AG04450 (cell line): ENCODE measurements at regions of chr20 and their contacts with region 1.

Region 1: DNA sequence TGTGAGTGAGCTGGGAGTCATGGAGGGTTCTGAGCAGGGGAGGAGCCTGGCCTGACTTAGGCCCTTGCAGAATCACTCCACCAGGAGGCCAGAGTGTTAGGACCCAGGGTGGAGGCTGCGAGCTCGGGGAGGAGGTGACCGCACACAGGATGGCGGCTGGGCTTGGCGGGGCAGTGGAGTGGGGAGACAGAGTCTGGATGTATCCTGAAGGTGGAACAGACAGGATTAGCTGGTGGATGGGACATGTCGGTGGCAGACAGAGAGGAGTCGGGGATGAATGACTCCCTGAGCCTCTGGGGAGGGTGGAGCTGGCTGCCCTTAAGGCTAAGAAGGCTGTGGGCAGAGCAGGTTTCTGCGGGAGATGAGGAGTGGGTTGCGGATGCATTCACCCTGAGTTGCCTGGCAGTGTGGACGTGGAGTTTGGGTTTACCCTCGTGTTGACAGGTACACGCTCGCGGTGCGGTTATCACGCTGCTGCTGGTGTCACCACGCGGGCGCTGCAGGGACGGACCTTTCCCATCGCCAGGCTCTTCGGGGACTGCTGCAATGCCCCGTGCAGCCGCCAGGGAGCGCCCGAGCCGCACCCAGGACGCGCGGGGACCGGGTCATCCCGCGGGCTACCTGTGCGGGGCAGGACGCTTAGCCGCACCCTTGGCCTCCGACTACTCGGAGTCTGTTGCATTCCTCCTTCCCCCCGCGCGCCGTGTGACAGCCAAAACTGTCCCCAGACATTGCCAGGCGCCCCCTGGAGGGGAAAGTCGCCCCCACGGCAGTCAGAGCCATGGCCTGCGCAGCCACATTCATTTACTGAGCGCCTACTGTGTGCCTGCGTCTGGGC is 43.0 kb upstream of the PTGIS start:
- DNase-seq: no peak
- H3K4me3 ChIP-seq: peak overlapping the region; percentile 29
- H3K27ac ChIP-seq: no peak overlapping the region
- H3K27me3 ChIP-seq: peaks cover 9% of the 10 kb centered on the region
- CTCF ChIP-seq: peak; percentile 99

Region 2: DNA sequence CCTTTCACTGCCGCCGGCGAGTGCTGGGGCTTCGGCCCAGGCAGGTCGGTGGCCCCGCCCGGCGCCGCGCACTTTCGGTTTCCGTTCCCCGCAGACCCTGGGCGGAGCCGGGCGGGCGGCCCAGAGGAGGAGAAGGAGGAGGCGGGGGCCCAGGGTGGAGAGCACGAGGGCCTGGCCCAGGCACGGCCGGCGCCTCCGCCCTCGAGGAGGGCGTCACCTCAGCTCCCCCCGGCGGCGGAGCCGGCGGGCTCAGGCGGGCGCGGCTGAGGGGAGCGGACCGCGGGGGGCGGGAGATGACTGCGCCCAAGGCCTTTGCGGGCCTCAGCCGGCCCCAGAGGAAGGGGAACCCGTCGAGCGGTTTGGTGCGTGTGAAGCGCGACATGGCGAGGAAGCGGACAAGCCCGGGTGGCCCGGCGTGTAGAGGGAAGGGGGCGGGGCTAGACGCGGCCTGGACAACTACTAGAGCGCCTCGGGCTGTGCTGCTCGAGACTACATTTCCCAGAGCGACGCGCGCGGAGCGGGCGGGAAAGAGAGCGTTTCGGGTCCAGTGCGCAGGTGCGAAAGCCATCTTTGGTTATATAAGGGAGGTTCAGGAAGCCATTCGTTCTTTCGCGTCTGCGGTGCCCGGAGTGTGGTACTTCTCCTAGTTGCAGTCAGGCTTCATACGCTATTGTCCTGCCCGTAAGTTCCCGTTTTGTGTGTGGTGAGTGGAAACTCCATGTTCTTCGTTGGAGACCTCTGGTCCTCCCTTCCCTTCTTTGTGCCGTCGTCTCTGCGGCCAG is 332.7 kb before region 1 on chr20 and contains the start of gene ZNFX1:
- CTCF ChIA-PET with region 1: no interaction called
- POLR2A ChIA-PET with region 1: no interaction called
- DNase-seq: peak; percentile 94
- H3K4me3 ChIP-seq: peak within 1 kb of the TSS; percentile 99
- H3K27ac ChIP-seq: peak within 1 kb of the TSS; percentile 90
- H3K27me3 ChIP-seq: no peaks in the 10 kb centered on the region
- CTCF ChIP-seq: no peak
- polyA plus RNA-seq, gene ZNFX1: 9.6 and 16.6 TPM in 2 replicates

Region 3: GRCh38 chr20:49583669-49584417 is 27.1 kb before region 1 on chr20:
- CTCF ChIA-PET with region 1: interaction called, 14 read pairs
- POLR2A ChIA-PET with region 1: no interaction called
- DNase-seq: peak; percentile 88
- H3K4me3 ChIP-seq: no peak overlapping the region
- H3K27ac ChIP-seq: peak overlapping the region; percentile 65
- H3K27me3 ChIP-seq: no peaks in the 10 kb centered on the region
- CTCF ChIP-seq: peak; percentile 12; the same call in 1 of the 2 replicates

Region 4: DNA sequence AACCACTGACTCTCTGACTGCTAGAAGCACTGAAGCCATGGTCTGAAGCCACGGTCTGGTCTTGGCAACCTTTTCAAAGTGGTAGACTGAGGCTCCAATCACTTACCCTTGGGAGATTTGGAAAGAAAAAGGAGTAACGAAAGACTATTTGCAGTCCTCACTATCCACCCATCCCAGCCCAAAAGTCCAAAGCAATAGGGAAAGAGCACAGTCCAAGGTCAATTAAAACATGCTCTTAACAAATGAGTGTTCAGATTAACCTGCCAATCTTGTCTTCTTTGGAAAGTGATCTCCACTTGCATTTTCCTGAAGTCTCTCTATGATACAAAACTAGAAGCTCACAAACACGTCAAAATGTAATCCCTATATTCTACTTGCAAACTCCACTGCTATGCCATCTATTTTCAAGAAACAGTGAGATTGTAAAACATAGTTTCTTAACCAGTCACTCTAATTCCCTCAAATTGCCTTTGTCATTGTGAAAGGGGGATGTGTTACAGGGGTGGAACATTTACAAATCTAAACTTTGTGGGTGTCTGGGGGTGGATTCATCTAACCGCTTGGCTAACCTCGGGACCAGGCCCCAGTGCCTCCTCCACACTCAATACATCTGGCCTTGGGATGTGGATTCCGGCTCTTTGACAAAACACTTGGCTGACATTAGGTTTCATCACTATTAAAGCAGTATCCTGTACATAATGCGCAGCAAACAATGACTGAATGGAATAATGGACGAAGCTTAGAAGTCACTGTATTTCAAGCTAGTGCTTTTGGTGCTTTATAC is 46.4 kb after region 1 on chr20:
- CTCF ChIA-PET with region 1: no interaction called
- POLR2A ChIA-PET with region 1: no interaction called
- DNase-seq: peak; percentile 32
- H3K4me3 ChIP-seq: no peak overlapping the region
- H3K27ac ChIP-seq: no peak overlapping the region
- H3K27me3 ChIP-seq: no peaks in the 10 kb centered on the region
- CTCF ChIP-seq: no peak

Region 5: GRCh38 chr20:49888345-49888966 is 277.5 kb after region 1 on chr20:
- CTCF ChIA-PET with region 1: interaction called, 10 read pairs
- POLR2A ChIA-PET with region 1: no interaction called
- DNase-seq: no peak
- H3K4me3 ChIP-seq: no peak overlapping the region
- H3K27ac ChIP-seq: no peak overlapping the region
- H3K27me3 ChIP-seq: no peaks in the 10 kb centered on the region
- CTCF ChIP-seq: peak; percentile 84